ENCODE measurements at regions of chr19 and their contacts with region 1.

Region 1: DNA sequence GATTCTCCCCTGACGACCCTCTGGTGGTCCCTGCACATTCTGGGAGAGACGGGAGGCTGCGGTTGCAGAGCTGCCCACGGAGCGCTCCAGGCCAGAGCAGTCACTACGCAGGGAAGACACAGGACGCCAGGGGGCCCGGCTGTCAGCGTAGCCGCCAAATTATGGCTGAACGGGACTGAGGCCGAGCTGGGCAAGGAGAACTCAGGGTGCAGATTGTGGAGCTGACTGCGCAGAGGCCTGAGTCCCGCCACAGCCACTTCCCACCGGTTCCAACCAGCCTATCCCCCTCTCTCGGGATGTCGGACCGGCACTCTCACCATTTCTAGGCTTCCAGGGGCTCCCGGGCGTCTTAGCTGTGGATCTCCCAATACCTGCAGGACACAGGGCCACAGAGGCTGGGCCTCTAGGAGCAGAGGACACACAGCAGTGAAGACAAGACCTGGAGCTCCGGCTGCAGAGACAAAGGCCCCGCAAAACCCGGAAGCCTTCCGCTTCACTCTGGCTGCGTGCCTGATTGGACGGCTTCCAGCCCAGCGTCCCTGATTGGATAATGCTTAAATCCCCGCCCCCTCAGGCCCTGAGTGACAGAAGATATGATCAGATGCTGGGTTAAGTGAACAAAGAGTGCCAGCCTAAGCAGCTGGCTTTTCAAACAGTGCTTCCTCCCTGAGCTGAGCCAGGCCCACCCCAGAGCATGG is at the start of gene ZNF737:
- DNase-seq: peak; percentile 95 to 99 (median 97)
- H3K4me3 ChIP-seq: peak within 1 kb of the TSS; percentile 60 to 93 (median 79)
- H3K27ac ChIP-seq: peak within 1 kb of the TSS; percentile 77 to 98 (median 94)
- H3K27me3 ChIP-seq: no peaks in the 10 kb centered on the region
- CTCF ChIP-seq: peak in 32 of 56 donors; percentile 8 to 43 (median 30)
- total RNA-seq, gene ZNF737: 21.0 to 49.3 (median 35.2) TPM

Region 2: GRCh38 chr19:20612711-20613316 is 47.3 kb after region 1 on chr19:
- intact Hi-C with region 1: no loop called
- DNase-seq: no peak
- H3K4me3 ChIP-seq: peak overlapping the region in 42 of 59 donors; percentile 1 to 55 (median 29)
- H3K27ac ChIP-seq: no peak overlapping the region
- H3K27me3 ChIP-seq: no peaks in the 10 kb centered on the region
- CTCF ChIP-seq: no peak

Region 3: GRCh38 chr19:20661150-20661819 is 95.8 kb after region 1 on chr19 and contains the start of gene ZNF626:
- intact Hi-C with region 1: loop called (anchors 2 kb)
- DNase-seq: peak; percentile 90 to 98 (median 96)
- H3K4me3 ChIP-seq: peak within 1 kb of the TSS; percentile 59 to 94 (median 81)
- H3K27ac ChIP-seq: peak within 1 kb of the TSS in 56 of 59 donors; percentile 39 to 92 (median 80)
- H3K27me3 ChIP-seq: no peaks in the 10 kb centered on the region
- CTCF ChIP-seq: peak in 6 of 56 donors; percentile 11 to 18 (median 14)
- total RNA-seq, gene ZNF626: 11.7 to 26.9 (median 18.8) TPM

Region 4: DNA sequence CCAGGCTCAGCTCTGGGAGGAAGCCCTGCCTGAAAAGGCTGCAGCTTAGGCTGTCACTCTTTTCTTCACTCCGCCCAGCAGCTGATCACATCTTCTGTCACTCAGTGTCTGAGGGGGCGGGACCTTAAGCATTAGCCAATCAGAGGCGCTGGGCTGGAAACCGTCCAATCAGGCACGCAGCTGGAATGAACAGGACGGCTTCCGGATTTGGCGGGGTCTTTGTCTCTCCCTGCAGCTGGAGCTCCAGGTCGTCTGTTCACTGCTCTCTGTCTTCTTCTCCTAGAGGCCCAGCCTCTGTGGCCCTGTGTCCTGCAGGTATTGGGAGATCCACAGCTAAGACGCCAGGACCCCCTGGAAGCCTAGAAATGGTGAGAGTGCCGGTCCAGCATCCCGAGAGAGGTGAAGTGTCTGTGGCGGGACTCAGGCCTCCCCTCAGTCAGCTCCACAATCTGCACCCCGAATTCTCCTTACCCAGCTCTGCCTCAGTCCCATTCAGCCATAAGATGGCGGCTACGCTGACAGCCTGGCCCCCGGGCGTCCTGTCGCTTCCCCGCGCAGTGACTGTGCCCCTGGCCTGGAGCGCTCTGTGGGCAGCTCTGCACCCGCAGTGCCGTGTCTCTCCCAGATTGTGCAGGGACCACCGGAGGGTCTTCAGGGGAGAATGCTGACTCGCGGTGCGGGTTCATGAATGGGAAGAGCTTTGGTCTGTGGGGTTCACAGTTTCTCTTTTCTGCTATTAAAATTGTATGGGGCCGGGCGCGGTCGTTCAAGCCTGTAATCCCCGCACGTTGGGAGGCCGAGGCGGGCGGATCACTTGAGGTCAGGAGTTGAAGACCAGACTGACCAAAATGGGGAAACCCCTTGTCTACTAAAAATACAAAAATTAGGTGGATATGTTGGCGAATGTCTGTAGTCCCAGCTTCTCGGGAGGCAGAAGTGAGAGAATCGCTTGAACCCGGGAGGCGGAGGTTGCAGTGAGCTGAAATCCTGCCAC is 210.9 kb after region 1 on chr19 and contains the start of gene ZNF66:
- intact Hi-C with region 1: loop called in 1 of 2 experiments (anchors 2 kb)
- DNase-seq: peak; percentile 95 to 99 (median 98)
- H3K4me3 ChIP-seq: peak within 1 kb of the TSS; percentile 43 to 98 (median 81)
- H3K27ac ChIP-seq: peak within 1 kb of the TSS in 35 of 59 donors; percentile 13 to 83 (median 57)
- H3K27me3 ChIP-seq: no peaks in the 10 kb centered on the region
- CTCF ChIP-seq: peak in 6 of 56 donors; percentile 11 to 29 (median 22)
- total RNA-seq, gene ZNF66: 5.6 to 20.0 (median 11.3) TPM

Region 5: GRCh38 chr19:20923077-20923871 is 357.8 kb after region 1 on chr19 and contains the start of gene ZNF85:
- intact Hi-C with region 1: loop called in 1 of 2 experiments (anchors 10 kb)
- DNase-seq: peak; percentile 83 to 96 (median 94)
- H3K4me3 ChIP-seq: peak within 1 kb of the TSS; percentile 48 to 93 (median 77)
- H3K27ac ChIP-seq: peak within 1 kb of the TSS in 57 of 59 donors; percentile 15 to 94 (median 79)
- H3K27me3 ChIP-seq: no peaks in the 10 kb centered on the region
- CTCF ChIP-seq: no peak
- total RNA-seq, gene ZNF85: 3.1 to 12.1 (median 7.1) TPM

Region 6: DNA sequence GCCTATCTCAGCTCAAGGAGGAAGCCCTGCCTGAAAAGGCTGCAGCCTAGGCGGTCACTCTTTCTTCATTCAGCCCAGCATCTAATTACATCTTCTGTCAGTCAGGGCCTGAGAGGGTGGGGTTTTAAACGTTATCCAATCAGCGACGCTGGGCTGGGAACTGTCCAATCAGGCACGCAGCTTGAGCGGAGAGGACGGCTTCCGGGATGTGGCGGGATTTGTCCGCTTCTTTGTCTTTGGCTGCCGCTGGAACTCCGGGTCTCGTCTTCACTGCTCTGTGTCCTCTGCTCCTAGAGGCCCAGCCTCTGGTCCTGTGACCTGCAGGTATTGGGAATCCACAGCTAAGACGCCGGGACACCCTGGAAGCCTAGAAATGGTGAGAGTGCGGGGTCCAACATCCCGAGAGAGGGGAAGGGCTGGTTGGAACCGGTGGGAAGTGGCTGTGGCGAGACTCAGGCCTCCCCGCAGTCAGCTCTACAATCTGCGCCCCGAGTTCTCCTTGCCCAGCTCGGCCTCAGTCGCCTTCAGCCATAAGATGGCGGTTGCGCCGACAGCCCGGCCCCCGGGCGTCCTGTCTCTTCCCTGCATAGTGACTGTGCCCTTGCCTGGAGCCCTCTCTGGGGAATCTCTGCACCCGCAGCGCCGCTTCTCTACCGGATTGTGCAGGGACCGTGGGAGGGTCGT is 793.4 kb after region 1 on chr19 and contains the start of gene ZNF738:
- intact Hi-C with region 1: no loop called
- DNase-seq: peak; percentile 88 to 97 (median 96)
- H3K4me3 ChIP-seq: peak within 1 kb of the TSS; percentile 59 to 96 (median 84)
- H3K27ac ChIP-seq: peak within 1 kb of the TSS in 53 of 59 donors; percentile 17 to 88 (median 73)
- H3K27me3 ChIP-seq: no peaks in the 10 kb centered on the region
- CTCF ChIP-seq: peak in 16 of 56 donors; percentile 5 to 37 (median 16)
- total RNA-seq, gene ZNF738: 3.9 to 28.7 (median 11.3) TPM

Region 7: GRCh38 chr19:21767065-21767800 is 1201.8 kb after region 1 on chr19 and contains the start of gene ZNF100:
- intact Hi-C with region 1: loop called in 1 of 2 experiments (anchors 10 kb)
- DNase-seq: peak; percentile 89 to 95 (median 93)
- H3K4me3 ChIP-seq: peak within 1 kb of the TSS; percentile 56 to 97 (median 85)
- H3K27ac ChIP-seq: peak within 1 kb of the TSS in 55 of 59 donors; percentile 13 to 93 (median 78)
- H3K27me3 ChIP-seq: no peaks in the 10 kb centered on the region
- CTCF ChIP-seq: peak in 15 of 56 donors; percentile 5 to 41 (median 23)
- total RNA-seq, gene ZNF100: 6.8 to 32.0 (median 14.3) TPM